ENCODE measurements at regions of chr17 and their contacts with region 1.

Region 1: GRCh38 chr17:47698749-47699535 is 5.0 kb downstream of the TBKBP1 start:
- DNase-seq: peak; percentile 94
- H3K4me3 ChIP-seq: peak overlapping the region in 1 of 8 donors; percentile 4
- H3K27ac ChIP-seq: peak overlapping the region in 4 of 8 donors; percentile 5 to 99 (median 58)
- H3K4me1 ChIP-seq: peaks cover 19 to 97% (median 76%) of the 10 kb centered on the region in 6 donors
- H3K27me3 ChIP-seq: no peaks in the 10 kb centered on the region
- CTCF ChIP-seq: peak; percentile 90 to 98 (median 95)
- POLR2A ChIP-seq: no peak

Region 2: GRCh38 chr17:47789611-47790561 is 90.9 kb after region 1 on chr17:
- intact Hi-C with region 1: loop called (anchors 10 kb)
- DNase-seq: peak; percentile 85
- H3K4me3 ChIP-seq: peak overlapping the region; percentile 14 to 69 (median 44)
- H3K27ac ChIP-seq: no peak overlapping the region
- H3K4me1 ChIP-seq: peaks cover 9 to 16% (median 10%) of the 10 kb centered on the region in 6 donors
- H3K27me3 ChIP-seq: peaks cover 0 to 94% (median 70%) of the 10 kb centered on the region in 7 donors
- CTCF ChIP-seq: peak in 10 of 11 experiments; percentile 11 to 64 (median 45)
- POLR2A ChIP-seq: no peak

Measured in spleen (tissue), 13 donors.